ENCODE measurements at regions of chr2 and their contacts with region 1.

Region 1: GRCh38 chr2:149743842-149744448 is 156.4 kb upstream of the MMADHC start:
- DNase-seq: peak; percentile 97
- ATAC-seq: peak; percentile 73
- H3K4me3 ChIP-seq: no peak overlapping the region
- H3K27ac ChIP-seq: peak overlapping the region; percentile 98
- H3K4me1 ChIP-seq: peaks cover 36% of the 10 kb centered on the region
- H3K27me3 ChIP-seq: no peaks in the 10 kb centered on the region
- CTCF ChIP-seq: peak; percentile 48
- POLR2A ChIP-seq: no peak
- RAD21 ChIP-seq: peak; percentile 53

Region 2: GRCh38 chr2:149858901-149859634 is 115.1 kb after region 1 on chr2:
- CTCF ChIA-PET with region 1: no interaction called
- POLR2A ChIA-PET with region 1: no interaction called
- dilution Hi-C with region 1: no loop called
- in situ Hi-C with region 1: no loop called
- intact Hi-C with region 1: loop called (anchors 2 kb)
- DNase-seq: peak; percentile 75
- ATAC-seq: peak; percentile 72
- H3K4me3 ChIP-seq: no peak overlapping the region
- H3K27ac ChIP-seq: peak overlapping the region; percentile 62; the same call in 1 of the 2 replicates
- H3K4me1 ChIP-seq: peaks cover 10% of the 10 kb centered on the region
- H3K27me3 ChIP-seq: no peaks in the 10 kb centered on the region
- CTCF ChIP-seq: no peak
- POLR2A ChIP-seq: no peak
- RAD21 ChIP-seq: no peak

Region 3: DNA sequence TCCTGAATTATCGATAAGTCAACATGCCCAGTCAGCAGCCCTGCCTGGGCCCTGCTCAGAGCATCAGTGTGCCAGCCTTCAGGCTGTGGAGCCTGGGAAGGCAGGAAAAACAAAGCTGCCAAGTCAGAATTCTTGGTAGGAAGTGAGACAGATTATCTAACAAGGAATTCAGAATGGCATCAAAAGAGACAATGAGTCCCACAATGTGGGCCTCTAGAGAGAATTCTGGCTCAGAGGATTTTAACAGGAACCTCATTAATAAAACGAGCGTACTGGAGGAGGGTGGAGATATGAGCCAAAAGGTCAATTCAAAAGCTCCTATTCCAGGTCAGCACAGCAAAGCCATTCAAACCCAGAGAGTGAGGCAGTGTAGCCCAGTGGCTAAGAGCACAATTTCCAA is 171.2 kb after region 1 on chr2:
- CTCF ChIA-PET with region 1: no interaction called
- POLR2A ChIA-PET with region 1: no interaction called
- dilution Hi-C with region 1: no loop called
- in situ Hi-C with region 1: no loop called
- intact Hi-C with region 1: no loop called
- DNase-seq: no peak
- ATAC-seq: no peak
- H3K4me3 ChIP-seq: no peak overlapping the region
- H3K27ac ChIP-seq: no peak overlapping the region
- H3K4me1 ChIP-seq: no peaks in the 10 kb centered on the region
- H3K27me3 ChIP-seq: no peaks in the 10 kb centered on the region
- CTCF ChIP-seq: no peak
- POLR2A ChIP-seq: no peak
- RAD21 ChIP-seq: no peak

Region 4: DNA sequence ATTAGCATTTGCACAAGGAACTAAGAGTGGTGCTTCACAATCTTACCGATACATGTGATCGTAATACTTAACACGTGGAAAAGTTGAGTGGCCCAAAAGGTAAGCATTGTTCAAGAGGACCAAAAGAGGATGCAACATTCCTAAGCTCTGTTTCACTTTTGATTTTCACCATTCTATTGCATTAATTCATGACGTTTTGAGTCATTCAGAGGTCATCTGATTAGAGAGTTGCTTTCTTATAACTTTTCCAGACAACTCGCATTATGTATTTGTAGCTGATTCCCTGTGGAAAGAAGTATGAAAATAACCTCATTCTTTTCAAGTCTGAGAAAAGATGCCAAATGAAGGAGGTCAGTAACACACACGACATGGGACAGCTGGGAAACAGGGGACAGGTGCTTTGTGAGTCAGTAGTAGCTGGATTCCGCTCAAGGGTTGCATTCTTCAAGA is 399.2 kb after region 1 on chr2:
- CTCF ChIA-PET with region 1: no interaction called
- POLR2A ChIA-PET with region 1: no interaction called
- dilution Hi-C with region 1: no loop called
- in situ Hi-C with region 1: no loop called
- intact Hi-C with region 1: loop called (anchors 10 kb)
- DNase-seq: peak; percentile 73
- ATAC-seq: peak; percentile 21
- H3K4me3 ChIP-seq: no peak overlapping the region
- H3K27ac ChIP-seq: no peak overlapping the region
- H3K4me1 ChIP-seq: peaks cover 7% of the 10 kb centered on the region
- H3K27me3 ChIP-seq: no peaks in the 10 kb centered on the region
- CTCF ChIP-seq: no peak
- POLR2A ChIP-seq: no peak
- RAD21 ChIP-seq: no peak

Region 5: GRCh38 chr2:150212722-150213171 is 468.8 kb after region 1 on chr2:
- CTCF ChIA-PET with region 1: no interaction called
- POLR2A ChIA-PET with region 1: no interaction called
- dilution Hi-C with region 1: no loop called
- in situ Hi-C with region 1: no loop called
- intact Hi-C with region 1: loop called (anchors 5 kb)
- DNase-seq: peak; percentile 77
- ATAC-seq: peak; percentile 28
- H3K4me3 ChIP-seq: no peak overlapping the region
- H3K27ac ChIP-seq: peak overlapping the region; percentile 60; the same call in 1 of the 2 replicates
- H3K4me1 ChIP-seq: peaks cover 18% of the 10 kb centered on the region
- H3K27me3 ChIP-seq: no peaks in the 10 kb centered on the region
- CTCF ChIP-seq: no peak
- POLR2A ChIP-seq: no peak
- RAD21 ChIP-seq: no peak

Measured in IMR-90 (cell line).